Cardiac septum (tissue), 1 donor: ENCODE measurements at regions of chr4 and their contacts with region 1.

Region 1: GRCh38 chr4:125432104-125432503 is 117.3 kb downstream of the FAT4 start:
- DNase-seq: no peak

Region 2: DNA sequence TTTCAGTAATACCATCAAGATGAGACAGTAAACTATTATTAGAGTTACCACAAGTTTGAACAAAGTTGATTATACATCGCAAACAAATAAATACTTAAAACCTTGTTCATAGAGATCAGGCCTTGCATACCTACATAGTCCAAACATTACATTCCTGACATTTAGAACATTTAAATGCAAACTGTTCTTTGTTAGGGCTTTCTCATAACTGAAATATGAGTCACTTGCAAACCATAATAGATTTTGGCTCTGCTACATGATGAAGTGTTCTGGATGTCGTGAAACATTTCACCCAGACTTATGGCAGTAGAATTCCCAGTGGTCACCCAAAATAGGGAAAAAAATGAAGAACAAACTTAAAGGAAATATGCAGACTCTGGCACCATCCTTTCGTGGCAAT is 42.4 kb before region 1 on chr4:
- intact Hi-C with region 1: loop called (anchors 5 kb)
- DNase-seq: no peak

Region 3: GRCh38 chr4:125735102-125735501 is 303.0 kb after region 1 on chr4:
- intact Hi-C with region 1: loop called (anchors 10 kb)
- DNase-seq: no peak